ENCODE measurements at regions of chr16 and their contacts with region 1.

Region 1: DNA sequence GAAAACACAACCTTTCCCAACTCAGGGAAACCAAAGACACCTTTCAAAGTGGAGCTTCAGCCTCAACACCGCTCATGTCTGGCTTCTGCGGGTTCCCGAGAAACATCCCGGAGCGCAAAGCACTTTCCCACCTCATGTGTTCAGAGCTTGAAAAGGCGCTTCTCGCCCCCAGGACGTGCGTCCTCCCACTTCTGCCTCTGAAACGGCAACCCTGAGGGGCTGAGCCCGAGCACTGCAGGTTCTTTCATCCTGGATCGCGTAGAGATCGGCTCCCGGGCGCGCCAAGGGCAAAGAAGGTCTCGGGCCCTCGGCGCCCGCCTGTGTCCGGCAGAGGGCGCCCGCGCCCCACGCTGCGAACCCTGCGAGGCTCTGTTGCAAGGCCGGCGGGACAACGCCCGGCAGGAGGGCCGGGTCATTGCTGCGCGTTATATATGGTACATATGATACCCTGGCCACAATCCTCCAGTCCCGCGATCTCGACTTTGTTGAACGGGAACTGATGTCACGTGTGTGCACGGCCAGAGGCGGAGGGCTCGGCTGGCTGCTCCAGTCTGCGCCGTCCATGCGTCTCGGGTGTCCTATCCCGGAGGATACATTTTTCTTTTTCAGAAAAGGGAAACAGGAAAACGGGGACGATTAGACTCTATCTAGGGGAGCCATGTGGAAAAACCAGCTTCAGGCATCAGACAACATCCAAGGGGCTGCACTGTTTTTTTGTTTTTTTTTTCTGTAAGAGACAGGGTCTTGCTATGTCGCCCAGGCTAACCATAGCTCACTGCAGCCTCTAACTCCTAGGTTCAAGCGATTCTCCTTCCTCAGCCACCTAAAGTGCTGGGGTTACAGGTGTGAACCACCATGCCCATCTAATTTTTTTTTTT is 19.1 kb downstream of the COQ7 start:
- DNase-seq: peak; percentile 73 to 83
- H3K4me3 ChIP-seq: peak overlapping the region; percentile 7 to 36
- H3K27ac ChIP-seq: no peak overlapping the region
- H3K4me1 ChIP-seq: no peaks in the 10 kb centered on the region
- H3K27me3 ChIP-seq: no peaks in the 10 kb centered on the region
- CTCF ChIP-seq: peak; percentile 97 to 100 (median 98)
- POLR2A ChIP-seq: no peak

Region 2: DNA sequence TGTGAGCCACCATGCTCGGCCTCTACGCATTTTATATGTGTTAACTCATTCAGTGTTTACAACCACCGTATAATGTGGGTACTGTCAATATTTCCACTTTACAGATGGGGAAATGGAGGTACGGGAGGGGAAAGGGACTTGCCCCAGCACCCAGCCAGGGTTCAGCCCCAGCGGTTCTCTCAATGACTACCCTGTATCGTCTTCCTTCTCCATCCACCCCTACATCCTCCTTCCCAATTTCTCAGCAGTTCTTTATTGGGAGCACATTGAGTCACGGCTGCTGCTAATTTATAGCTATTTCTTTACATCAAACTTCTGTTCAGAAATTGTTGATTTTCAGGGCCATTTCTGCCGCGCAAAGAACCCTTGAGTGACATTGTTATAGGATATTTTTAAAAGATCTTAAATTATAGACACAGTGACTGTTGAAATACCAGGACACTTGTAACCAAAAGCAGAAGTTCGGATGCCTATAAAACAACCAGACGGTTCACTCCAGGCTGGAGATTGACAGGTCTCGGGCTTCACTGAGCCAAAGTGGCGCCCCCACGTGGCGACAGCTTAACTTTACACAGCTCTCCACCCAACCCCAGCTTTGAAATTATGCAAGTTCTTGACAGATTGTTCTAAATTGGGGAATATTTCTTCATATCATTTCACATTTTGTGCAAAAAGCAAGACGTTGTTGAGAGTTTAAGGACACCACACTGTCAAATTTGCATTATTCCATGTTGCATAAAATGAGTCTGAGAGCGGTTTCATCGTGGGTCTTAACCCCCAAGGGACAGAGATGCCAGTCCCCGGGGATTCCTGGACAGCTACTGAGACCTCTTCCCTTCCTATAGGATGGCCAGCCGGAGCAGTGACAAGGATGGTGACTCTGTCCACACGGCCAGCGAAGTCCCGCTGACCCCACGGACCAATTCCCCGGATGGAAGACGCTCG is 93.3 kb after region 1 on chr16:
- intact Hi-C with region 1: loop called (anchors 10 kb)
- DNase-seq: peak in 1 of 2 donors; percentile 35
- H3K4me3 ChIP-seq: no peak overlapping the region
- H3K27ac ChIP-seq: no peak overlapping the region
- H3K4me1 ChIP-seq: no peaks in the 10 kb centered on the region
- H3K27me3 ChIP-seq: no peaks in the 10 kb centered on the region
- CTCF ChIP-seq: peak in 3 of 4 experiments; percentile 11 to 33 (median 28)
- POLR2A ChIP-seq: no peak

Region 3: DNA sequence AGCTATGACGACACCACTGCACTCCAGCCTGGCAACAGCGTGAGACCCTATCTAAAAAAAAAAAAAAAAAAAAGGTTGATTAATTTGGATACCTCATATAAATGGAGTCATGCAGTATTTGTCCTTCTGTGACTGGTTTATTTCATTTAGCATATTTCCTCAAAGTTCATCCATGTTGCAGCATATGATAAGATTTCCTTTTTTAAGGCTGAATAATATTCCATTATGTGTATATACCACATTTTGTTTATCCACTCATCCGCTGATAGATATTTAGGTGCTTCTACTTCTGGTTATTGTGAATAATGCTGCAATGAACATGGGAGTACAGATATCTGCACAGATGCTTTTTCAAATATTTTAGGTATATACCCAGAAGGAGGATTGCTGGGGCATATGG is 287.8 kb after region 1 on chr16:
- intact Hi-C with region 1: loop called (anchors 5 kb)
- DNase-seq: no peak
- H3K4me3 ChIP-seq: no peak overlapping the region
- H3K27ac ChIP-seq: no peak overlapping the region
- H3K4me1 ChIP-seq: no peaks in the 10 kb centered on the region
- H3K27me3 ChIP-seq: no peaks in the 10 kb centered on the region
- CTCF ChIP-seq: no peak
- POLR2A ChIP-seq: no peak

Region 4: DNA sequence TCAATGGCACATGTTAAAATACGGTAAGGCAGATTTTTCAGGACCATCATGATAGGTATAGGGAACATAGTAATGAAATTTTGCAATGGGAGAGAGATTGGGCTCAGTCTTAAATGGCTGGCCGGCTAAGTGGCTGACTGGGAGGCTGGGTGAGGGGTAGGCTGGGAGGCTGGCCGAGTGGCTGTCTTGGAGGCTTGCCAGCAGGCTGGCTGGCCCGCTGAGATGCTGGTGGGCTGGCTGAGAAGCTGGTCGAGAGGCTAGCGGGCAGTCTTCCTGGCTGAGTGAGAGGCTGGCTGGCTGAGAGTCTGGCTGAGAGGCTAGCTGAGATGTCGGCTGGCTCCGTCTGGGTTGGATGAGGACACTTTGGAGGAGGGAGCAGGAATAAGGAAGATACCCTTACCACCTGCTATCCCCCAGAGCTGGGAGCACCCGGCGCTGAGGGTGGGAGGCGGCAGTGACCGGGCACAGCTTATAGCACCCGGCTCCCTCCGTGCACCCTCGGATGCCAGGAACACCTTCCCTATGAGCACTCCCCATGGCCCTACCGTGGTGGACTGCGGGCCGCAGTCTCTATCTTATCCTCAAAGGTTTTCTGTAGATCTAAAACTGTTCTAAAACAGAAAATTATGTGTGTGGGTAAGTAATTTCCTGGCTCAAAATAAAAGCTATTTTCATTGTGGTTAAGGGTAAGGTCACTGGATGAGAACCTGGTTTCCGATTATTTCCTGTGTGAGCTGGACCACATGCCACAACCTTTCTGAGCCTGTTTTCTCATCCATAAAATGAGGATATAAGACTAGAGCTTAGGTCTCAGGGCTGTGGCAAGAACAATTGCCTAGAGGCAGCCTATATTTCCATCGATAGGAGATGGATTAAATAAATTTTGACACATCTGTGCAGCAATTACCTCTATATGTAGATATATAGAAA is 296.6 kb after region 1 on chr16:
- intact Hi-C with region 1: loop called (anchors 5 kb)
- DNase-seq: no peak
- H3K4me3 ChIP-seq: no peak overlapping the region
- H3K27ac ChIP-seq: no peak overlapping the region
- H3K4me1 ChIP-seq: no peaks in the 10 kb centered on the region
- H3K27me3 ChIP-seq: no peaks in the 10 kb centered on the region
- CTCF ChIP-seq: no peak
- POLR2A ChIP-seq: no peak